ENCODE measurements at regions of chr10 and their contacts with region 1.

Region 1: GRCh38 chr10:25026463-25026862 is 10.1 kb downstream of the THNSL1 start:
- DNase-seq: peak; percentile 49
- H3K4me3 ChIP-seq: no peak overlapping the region
- H3K27ac ChIP-seq: no peak overlapping the region
- H3K4me1 ChIP-seq: peaks cover 24% of the 10 kb centered on the region
- H3K27me3 ChIP-seq: no peaks in the 10 kb centered on the region
- CTCF ChIP-seq: peak; percentile 17 to 18
- POLR2A ChIP-seq: no peak

Region 2: GRCh38 chr10:25061711-25062449 is 35.4 kb after region 1 on chr10:
- CTCF ChIA-PET with region 1: interaction called, 4 read pairs
- POLR2A ChIA-PET with region 1: no interaction called
- dilution Hi-C with region 1: no loop called
- intact Hi-C with region 1: loop called (anchors 1 kb)
- DNase-seq: no peak
- H3K4me3 ChIP-seq: no peak overlapping the region
- H3K27ac ChIP-seq: peak overlapping the region; percentile 93
- H3K4me1 ChIP-seq: peaks cover 29% of the 10 kb centered on the region
- H3K27me3 ChIP-seq: no peaks in the 10 kb centered on the region
- CTCF ChIP-seq: no peak
- POLR2A ChIP-seq: no peak

Region 3: DNA sequence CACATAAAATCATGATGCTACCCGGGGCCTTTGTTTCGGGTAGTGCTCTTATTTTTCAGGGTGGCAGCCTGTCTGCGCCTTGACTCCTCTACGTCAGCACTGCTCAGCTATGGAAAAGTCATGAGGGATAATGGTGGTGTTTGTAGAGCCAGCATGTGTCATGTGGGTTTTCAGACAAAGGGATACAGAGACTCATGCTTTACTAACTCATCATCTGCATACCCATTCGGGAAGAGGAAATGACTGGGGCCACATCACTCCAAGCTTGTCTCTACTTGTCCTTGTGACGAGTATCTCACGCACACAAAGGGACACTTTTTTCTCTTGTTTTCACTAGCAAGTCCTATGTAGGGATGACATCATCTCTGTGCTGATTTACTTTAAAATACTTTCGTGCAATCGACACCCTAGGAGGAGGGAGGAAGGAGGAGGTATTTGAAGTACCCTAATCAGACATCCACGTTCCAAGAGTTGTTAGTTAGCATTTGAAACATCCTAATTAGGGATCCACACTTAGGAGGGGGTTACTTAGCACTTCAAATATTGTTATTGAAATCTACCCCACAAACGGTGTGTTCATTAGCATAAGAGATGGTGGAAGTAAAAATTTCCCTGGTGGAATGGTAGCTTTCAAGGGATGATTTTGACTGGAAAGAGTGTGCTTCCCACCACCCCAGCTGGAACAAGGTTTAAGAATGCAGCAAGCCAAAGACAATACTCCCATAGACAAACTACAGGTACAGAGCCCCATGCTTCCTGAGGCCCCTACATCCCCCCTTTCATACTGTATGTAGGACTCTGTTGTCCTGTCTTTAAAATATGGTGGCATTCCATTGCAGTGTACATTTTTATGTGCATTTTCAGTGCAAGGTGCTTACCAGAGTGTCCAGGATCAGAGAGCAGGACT is 41.9 kb after region 1 on chr10:
- CTCF ChIA-PET with region 1: interaction called, 3 read pairs
- POLR2A ChIA-PET with region 1: no interaction called
- dilution Hi-C with region 1: no loop called
- intact Hi-C with region 1: loop called (anchors 1 kb)
- DNase-seq: peak; percentile 49
- H3K4me3 ChIP-seq: no peak overlapping the region
- H3K27ac ChIP-seq: peak overlapping the region; percentile 87
- H3K4me1 ChIP-seq: peaks cover 20% of the 10 kb centered on the region
- H3K27me3 ChIP-seq: no peaks in the 10 kb centered on the region
- CTCF ChIP-seq: no peak
- POLR2A ChIP-seq: no peak